A673 (cell line): ENCODE measurements at regions of chr6 and their contacts with region 1.

Region 1: DNA sequence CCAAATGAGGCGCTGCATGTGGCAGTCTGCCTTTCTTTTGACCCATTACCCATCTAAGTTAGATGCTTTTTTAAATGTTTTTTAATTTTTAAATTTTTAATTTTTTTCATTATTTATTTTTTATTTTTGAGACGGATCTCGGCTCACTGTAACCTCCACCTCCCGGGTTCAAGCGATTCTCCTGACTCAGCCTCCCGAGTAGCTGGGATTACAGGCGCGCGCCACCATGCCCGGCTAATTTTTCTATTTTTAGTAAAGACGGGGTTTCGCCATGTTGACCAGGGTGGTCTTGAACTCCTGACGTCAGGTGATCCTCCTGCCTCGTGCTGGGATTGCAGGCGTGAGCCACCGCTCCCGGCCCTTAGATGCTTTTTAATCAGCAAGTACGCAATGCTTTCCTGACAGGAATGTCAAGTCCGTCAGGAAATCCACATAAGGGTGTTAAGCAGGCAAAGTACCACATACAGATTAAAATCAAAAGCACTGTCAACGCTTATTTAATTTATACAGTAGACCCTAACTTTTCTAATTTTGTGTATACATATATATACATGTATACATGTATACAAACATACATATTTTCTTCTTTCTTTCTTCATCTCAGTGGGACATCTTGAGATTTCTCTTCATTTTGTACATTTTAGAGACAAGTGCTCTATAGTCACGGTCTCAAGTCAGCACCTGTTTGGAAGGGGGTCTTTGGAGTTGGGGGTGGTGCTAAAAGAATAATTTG is 995 bp upstream of the GSTA4 start:
- DNase-seq: peak; percentile 89
- H3K4me3 ChIP-seq: peak overlapping the region; percentile 44
- H3K27ac ChIP-seq: no peak overlapping the region
- H3K4me1 ChIP-seq: peaks cover 11% of the 10 kb centered on the region
- H3K27me3 ChIP-seq: no peaks in the 10 kb centered on the region
- CTCF ChIP-seq: no peak

Region 2: DNA sequence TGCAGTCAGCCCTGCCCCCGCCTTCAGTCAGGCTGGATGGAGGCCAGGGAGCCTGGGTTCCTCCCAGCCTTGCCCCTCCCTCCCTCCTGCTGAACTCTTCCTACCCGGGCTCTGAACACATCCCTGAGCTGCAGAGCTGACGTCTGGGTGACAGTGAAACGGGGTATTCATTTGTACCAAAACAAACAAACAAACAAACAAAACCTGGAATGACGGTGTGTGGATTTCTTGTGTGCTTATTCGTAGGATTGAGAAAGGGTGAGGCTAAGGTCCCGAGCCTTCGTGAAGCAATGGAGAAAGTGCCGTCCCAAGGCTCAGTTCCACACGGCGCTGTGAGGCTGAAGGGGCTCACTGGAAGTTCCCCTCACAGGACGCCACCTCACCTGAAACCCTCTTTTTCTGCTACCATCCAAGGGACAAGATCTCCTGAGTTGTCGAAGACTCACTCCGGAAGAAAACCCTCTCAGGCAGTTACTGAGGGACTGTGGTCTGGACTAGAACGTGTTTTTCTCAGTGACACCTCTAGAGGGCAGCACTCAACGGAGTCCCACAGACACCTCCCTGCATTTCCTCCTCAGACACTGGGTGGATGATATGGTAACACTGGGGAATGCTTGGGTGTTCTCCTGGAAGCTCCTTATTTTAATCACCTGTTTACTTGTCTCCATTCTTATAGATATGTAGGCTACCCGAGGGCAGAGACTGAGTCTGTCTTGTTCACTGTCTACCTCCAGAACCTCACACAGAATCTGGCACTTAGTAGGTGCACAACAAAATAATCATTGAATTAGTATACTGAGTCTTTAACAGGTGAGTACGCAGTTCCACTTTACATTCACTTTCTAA is 113.9 kb before region 1 on chr6:
- CTCF ChIA-PET with region 1: no interaction called
- POLR2A ChIA-PET with region 1: no interaction called
- intact Hi-C with region 1: loop called (anchors 5 kb)
- DNase-seq: peak; percentile 84
- H3K4me3 ChIP-seq: peak overlapping the region; percentile 46
- H3K27ac ChIP-seq: no peak overlapping the region
- H3K4me1 ChIP-seq: no peaks in the 10 kb centered on the region
- H3K27me3 ChIP-seq: no peaks in the 10 kb centered on the region
- CTCF ChIP-seq: peak; percentile 92

Region 3: DNA sequence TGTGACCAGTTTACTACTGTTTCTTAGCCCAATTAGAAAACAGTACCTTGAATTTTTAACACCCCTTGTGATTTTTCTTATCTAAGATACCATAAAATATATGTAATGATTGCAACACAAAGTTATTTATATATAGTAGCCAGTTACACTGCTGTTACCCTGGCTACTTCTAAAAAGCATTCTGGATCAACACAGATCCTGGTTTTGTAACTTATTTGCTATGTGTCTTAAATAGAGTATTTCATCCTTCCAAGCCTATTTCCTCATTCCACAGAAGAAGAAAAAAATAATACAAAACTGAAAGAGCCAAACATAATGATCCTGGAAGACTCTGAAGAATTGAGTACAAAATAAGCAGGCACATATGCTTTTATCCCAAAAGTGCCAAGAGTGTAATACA is 18.0 kb after region 1 on chr6:
- CTCF ChIA-PET with region 1: no interaction called
- POLR2A ChIA-PET with region 1: no interaction called
- intact Hi-C with region 1: no loop called
- DNase-seq: no peak
- H3K4me3 ChIP-seq: no peak overlapping the region
- H3K27ac ChIP-seq: no peak overlapping the region
- H3K4me1 ChIP-seq: no peaks in the 10 kb centered on the region
- H3K27me3 ChIP-seq: no peaks in the 10 kb centered on the region
- CTCF ChIP-seq: no peak

Region 4: GRCh38 chr6:53042112-53042511 is 46.0 kb after region 1 on chr6:
- CTCF ChIA-PET with region 1: interaction called, 5 read pairs
- POLR2A ChIA-PET with region 1: no interaction called
- intact Hi-C with region 1: loop called (anchors 5 kb)
- DNase-seq: peak; percentile 25
- H3K4me3 ChIP-seq: no peak overlapping the region
- H3K27ac ChIP-seq: no peak overlapping the region
- H3K4me1 ChIP-seq: peaks cover 29% of the 10 kb centered on the region
- H3K27me3 ChIP-seq: no peaks in the 10 kb centered on the region
- CTCF ChIP-seq: no peak